WTC11 (cell line): ENCODE measurements at regions of chr7 and their contacts with region 1.

Region 1: GRCh38 chr7:12623897-12624498 is 53.5 kb downstream of the SCIN start:
- DNase-seq: no peak
- ATAC-seq: peak; percentile 46; the same call in 1 of the 2 replicates
- H3K4me3 Mint-ChIP-seq: no peak overlapping the region
- H3K27ac Mint-ChIP-seq: no peak overlapping the region
- H3K4me1 Mint-ChIP-seq: peaks cover 5% of the 10 kb centered on the region
- H3K27me3 Mint-ChIP-seq: no peaks in the 10 kb centered on the region; the same call in 1 of the 2 replicates
- CTCF ChIP-seq: peak; percentile 78

Region 2: DNA sequence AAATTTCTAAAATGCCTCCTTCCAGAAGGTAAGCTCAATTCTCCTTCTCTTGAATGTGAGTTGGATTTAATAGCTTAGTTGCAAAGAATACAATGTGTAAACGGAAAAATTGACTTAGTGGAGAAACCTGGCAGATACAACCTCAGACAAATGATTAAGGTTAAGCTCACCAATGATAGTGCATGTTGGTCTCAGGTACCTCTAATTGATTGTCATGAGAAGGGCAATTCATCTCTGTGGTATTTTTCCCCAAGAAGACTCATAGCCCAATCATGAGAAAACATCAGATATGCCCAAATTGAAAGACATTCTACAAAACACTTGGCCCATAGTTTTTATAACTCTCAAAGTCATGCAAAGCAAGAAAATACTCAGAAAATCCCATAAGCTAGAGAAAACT is 449.1 kb before region 1 on chr7:
- CTCF ChIA-PET with region 1: no interaction called
- POLR2A ChIA-PET with region 1: no interaction called
- DNase-seq: no peak
- ATAC-seq: no peak
- H3K4me3 Mint-ChIP-seq: no peak overlapping the region
- H3K27ac Mint-ChIP-seq: no peak overlapping the region
- H3K4me1 Mint-ChIP-seq: no peaks in the 10 kb centered on the region
- H3K27me3 Mint-ChIP-seq: no peaks in the 10 kb centered on the region
- CTCF ChIP-seq: no peak

Region 3: GRCh38 chr7:12518920-12519681 is 104.9 kb before region 1 on chr7:
- CTCF ChIA-PET with region 1: interaction called, 66 read pairs
- POLR2A ChIA-PET with region 1: no interaction called
- DNase-seq: peak; percentile 68
- ATAC-seq: peak; percentile 98
- H3K4me3 Mint-ChIP-seq: no peak overlapping the region
- H3K27ac Mint-ChIP-seq: no peak overlapping the region
- H3K4me1 Mint-ChIP-seq: peaks cover 3% of the 10 kb centered on the region
- H3K27me3 Mint-ChIP-seq: peaks cover 5% of the 10 kb centered on the region; the same call in 1 of the 2 replicates
- CTCF ChIP-seq: peak; percentile 75

Region 4: DNA sequence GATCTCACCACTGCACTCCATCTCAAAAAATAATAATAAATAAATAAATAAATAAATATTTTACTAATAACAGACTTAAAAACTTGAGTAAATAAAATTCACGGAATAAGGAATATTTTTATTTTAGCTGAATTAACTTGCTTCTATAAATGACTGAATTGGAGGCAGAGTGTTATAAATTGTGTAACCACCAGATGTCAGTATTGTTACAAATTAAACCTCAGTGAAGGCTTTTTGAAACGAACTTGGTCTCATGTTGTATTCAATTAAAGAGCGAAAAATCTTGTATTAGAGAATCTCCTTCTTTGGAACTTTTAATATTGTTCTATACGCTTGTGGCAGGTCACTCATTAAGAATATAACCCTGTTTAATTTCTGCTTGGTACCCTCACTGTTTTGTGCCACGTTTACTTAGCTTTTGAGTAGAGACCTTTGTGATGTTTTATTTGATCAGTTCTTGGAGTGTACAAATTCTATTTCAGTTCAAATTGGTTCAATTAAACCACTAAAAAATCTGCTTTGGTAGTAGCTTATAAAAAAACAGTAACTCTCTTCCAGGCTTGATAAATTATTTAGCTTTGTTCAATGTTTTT is 99.1 kb before region 1 on chr7:
- CTCF ChIA-PET with region 1: interaction called, 66 read pairs
- POLR2A ChIA-PET with region 1: no interaction called
- DNase-seq: no peak
- ATAC-seq: peak; percentile 48; the same call in 1 of the 2 replicates
- H3K4me3 Mint-ChIP-seq: no peak overlapping the region
- H3K27ac Mint-ChIP-seq: no peak overlapping the region
- H3K4me1 Mint-ChIP-seq: peaks cover 7% of the 10 kb centered on the region
- H3K27me3 Mint-ChIP-seq: no peaks in the 10 kb centered on the region
- CTCF ChIP-seq: peak; percentile 47; the same call in 1 of the 2 replicates

Region 5: GRCh38 chr7:12570534-12571461 is 53.2 kb before region 1 on chr7 and contains the start of gene SCIN:
- CTCF ChIA-PET with region 1: interaction called, 14 read pairs
- POLR2A ChIA-PET with region 1: no interaction called
- DNase-seq: peak; percentile 55
- ATAC-seq: peak; percentile 84
- H3K4me3 Mint-ChIP-seq: peak within 1 kb of the TSS; percentile 74
- H3K27ac Mint-ChIP-seq: no peak within 1 kb of the TSS
- H3K4me1 Mint-ChIP-seq: peaks cover 23% of the 10 kb centered on the region
- H3K27me3 Mint-ChIP-seq: peaks cover 48% of the 10 kb centered on the region
- CTCF ChIP-seq: no peak
- total RNA-seq, gene SCIN: 0.80 to 1.2 TPM (median 0.98 TPM) in 3 replicates

Region 6: GRCh38 chr7:12638851-12639467 is 15.0 kb after region 1 on chr7:
- CTCF ChIA-PET with region 1: interaction called, 10 read pairs
- POLR2A ChIA-PET with region 1: no interaction called
- DNase-seq: no peak
- ATAC-seq: no peak
- H3K4me3 Mint-ChIP-seq: no peak overlapping the region
- H3K27ac Mint-ChIP-seq: no peak overlapping the region
- H3K4me1 Mint-ChIP-seq: peaks cover 3% of the 10 kb centered on the region; the same call in 1 of the 2 replicates
- H3K27me3 Mint-ChIP-seq: no peaks in the 10 kb centered on the region
- CTCF ChIP-seq: no peak; the same call in 1 of the 2 replicates